Right ventricle myocardium superior (tissue), 1 donor: ENCODE measurements at regions of chr6 and their contacts with region 1.

Region 1: GRCh38 chr6:2634139-2634964 is 116.4 kb downstream of the MYLK4 start:
- DNase-seq: peak; percentile 93
- ATAC-seq: peak; percentile 95

Region 2: GRCh38 chr6:1609648-1610496 is 1024.5 kb before region 1 on chr6 and contains the start of gene FOXC1:
- intact Hi-C with region 1: loop called (anchors 5 kb)
- DNase-seq: peak; percentile 92
- ATAC-seq: peak; percentile 93
- total RNA-seq, gene FOXC1: 3.5 TPM

Region 3: GRCh38 chr6:2448820-2449571 is 185.4 kb before region 1 on chr6:
- intact Hi-C with region 1: loop called (anchors 10 kb)
- DNase-seq: no peak
- ATAC-seq: peak; percentile 67

Region 4: DNA sequence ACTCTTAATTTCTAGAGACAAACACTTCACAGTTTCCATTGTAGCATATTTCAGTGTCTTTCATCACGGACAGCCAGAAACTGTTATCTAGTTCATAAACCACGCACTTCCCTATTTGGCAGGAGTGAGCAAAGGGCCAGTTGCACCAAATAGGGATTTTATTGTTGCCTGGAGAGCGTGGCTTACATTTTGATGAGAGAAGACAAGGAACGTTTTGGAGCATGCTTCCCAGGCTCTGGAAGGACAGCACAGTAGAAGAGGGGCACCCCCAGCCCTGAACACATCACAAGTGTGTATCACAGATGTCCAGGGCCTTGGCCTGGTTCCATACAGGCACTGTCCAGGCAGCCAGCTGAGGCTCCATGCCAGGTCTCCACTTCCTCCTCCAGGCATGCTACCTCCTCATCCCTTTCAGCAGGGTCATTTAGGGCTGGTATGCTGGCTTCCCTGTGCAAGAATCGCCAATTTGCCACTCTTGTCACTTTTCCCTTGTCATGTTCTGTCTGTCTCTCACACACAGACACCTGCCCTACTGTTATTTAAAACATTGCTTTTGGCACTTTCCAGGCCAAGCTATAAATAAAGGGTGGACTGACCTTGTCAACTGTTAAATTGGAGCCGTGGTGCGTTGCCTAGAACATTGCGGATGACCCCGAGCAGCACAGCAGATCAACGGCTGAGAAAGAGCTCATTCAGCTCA is 153.9 kb before region 1 on chr6:
- intact Hi-C with region 1: loop called (anchors 10 kb)
- DNase-seq: peak; percentile 80
- ATAC-seq: peak; percentile 82

Region 5: DNA sequence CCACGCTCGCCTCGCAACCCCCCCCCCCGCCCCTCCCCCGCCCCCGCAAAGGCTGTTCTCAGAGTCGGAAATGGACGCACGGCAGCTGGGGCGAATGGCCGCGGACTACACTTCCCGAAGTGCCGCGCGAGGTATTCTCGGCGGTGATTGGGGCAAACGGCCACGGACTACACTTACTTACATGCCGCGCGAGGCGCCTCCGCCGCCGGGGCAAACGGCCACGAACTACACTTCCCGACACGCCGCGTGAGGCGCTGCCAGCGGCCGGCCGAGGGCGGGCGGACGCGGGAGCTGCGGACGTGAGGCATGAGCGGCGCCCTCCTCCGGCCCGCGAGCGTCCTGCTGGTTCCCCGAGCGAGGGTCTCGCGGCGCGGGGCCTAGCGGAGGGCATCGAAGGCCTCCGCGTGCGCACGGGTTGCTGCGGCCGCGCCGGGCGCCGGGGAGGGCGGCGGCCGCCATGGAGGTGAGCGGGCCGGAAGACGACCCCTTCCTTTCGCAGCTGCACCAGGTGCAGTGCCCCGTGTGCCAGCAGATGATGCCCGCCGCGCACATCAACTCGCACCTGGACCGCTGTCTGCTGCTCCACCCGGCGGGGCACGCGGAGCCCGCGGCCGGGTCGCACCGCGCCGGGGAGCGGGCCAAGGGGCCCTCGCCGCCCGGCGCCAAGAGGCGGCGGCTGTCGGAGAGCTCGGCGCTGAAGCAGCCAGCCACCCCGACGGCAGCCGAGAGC is 131.0 kb after region 1 on chr6 and contains the start of gene WRNIP1:
- intact Hi-C with region 1: no loop called
- DNase-seq: peak; percentile 99
- ATAC-seq: peak; percentile 91
- total RNA-seq, gene WRNIP1: 39.8 TPM